Right cardiac atrium (tissue), 5 donors: ENCODE measurements at regions of chr7 and their contacts with region 1.

Region 1: GRCh38 chr7:102129636-102130370 is 156.9 kb upstream of the SH2B2 start:
- DNase-seq: no peak
- ATAC-seq: no peak
- H3K4me3 ChIP-seq: no peak overlapping the region
- H3K27ac ChIP-seq: no peak overlapping the region
- H3K4me1 ChIP-seq: peaks cover 3% of the 10 kb centered on the region
- H3K27me3 ChIP-seq: no peaks in the 10 kb centered on the region

Region 2: DNA sequence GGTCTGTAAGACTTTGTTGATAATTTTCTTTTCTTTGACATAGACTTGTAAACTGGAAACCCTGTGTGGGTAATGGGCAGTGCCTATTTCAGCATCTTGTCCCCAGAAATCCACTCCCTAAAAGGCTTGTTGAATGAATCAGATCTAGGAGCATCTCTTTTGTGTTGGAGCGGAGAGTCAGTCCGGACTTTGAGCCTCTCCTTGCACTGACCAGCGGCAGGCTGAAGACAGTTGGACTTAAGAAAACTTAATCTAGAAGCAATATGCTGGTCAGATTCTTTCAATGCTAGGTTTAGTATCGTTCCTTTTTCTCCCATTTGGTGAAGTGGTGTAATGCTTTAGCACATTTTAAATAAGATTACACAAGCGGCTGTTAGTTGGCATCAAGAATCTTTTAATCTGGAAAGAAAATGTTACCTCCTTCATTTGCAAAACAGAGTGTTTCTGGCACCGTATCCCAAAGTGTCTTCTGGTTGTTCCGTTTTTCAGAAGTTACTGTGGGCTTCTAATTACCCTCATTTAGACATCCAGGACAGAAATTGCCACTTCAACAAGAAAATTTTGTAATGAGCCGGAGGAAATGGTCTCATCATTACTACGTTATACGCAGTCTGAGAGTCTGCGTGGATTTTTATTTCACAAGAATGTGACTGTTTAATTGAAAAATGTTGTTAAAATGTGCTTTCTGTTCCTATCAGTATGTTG is 237.7 kb before region 1 on chr7:
- intact Hi-C with region 1: loop called in 1 of 4 experiments (anchors 10 kb)
- DNase-seq: no peak
- ATAC-seq: peak; percentile 19 to 34
- H3K4me3 ChIP-seq: no peak overlapping the region
- H3K27ac ChIP-seq: no peak overlapping the region
- H3K4me1 ChIP-seq: peaks cover 12% of the 10 kb centered on the region
- H3K27me3 ChIP-seq: no peaks in the 10 kb centered on the region